OCI-LY7 (cell line): ENCODE measurements at regions of chr5 and their contacts with region 1.

Region 1: DNA sequence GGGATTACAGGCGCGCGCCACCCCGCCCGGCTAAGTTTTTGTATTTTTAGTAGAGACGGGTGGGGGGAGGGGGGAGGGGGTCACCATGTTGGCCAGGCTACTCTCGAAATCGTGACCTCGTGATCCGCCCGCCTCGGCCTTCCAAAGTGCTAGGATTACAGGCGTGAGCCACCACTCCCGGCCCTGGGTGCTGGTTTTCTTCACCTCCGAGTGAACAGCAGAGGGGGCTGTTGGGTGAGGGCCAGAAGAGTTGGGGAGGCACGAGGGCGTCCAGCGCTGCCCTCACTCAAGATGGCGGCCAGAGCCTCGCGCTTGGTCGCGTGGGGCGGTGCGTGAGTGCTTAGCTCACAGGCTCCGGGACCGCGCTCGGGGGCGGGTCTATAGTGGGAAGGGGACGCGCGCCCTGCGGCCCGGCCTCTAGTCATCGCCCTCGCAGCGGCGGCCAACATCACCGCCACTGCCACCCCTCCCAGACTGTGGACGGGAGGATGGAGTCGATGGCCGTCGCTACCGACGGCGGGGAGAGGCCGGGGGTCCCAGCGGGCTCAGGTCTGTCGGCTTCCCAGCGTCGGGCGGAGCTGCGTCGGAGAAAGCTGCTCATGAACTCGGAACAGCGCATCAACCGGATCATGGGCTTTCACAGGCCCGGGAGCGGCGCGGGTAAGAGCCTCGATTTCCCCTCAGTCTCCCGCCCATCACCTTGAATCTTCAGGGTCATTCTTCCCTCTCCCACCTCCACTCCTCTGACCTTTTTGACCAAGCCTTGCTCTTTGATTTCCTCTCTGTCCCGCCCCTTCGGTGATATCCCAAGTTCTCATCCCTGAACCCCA is at the start of gene CAMLG:
- DNase-seq: peak; percentile 98
- H3K4me3 ChIP-seq: peak within 1 kb of the TSS; percentile 84
- H3K27ac ChIP-seq: peak within 1 kb of the TSS; percentile 42
- H3K4me1 ChIP-seq: peaks cover 36% of the 10 kb centered on the region
- CTCF ChIP-seq: peak; percentile 79
- total RNA-seq, gene CAMLG: 27.3 and 28.5 TPM in 2 replicates

Region 2: DNA sequence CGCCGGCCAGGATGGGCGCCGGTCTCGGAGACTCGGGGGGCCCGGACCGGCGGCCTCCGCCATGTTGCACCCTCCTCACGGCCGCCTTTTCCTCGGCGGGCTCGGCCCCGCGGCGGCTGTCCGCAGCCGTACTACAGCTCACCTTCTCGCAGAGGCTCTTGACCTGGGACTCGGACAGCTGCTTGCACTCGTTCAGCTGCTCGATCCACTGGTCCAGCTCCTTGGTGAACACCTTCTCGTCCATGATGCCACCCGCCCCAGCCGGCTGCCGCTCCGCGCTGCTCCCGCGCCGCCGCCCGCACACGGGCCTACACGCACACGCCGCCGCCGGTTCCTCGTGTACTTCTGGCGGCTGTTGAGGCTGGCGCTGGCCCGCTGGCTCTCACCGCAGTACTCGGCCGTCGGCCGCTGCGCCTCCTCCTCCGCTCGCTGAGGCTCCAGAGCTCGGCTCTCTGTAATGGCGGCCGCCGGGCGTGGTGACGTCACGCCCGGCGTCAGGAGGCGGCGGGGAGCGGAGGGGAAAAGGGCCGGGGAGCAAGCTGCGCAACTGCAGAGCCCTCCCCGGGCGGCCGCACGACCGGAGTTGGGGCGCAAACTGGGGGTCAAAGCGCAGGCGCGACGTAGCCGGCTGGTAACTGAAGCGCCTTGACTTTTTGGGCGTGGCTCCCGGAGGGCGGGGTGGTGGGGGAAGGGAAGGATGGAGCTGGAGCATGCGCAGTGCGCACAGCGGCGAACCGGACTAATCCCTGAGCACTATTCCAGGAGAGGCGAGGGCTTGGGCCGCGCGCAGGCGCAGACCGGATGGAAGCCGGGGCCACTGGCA is 512.5 kb before region 1 on chr5 and contains the start of gene PPP2CA:
- CTCF ChIA-PET with region 1: no interaction called
- POLR2A ChIA-PET with region 1: no interaction called
- intact Hi-C with region 1: loop called (anchors 5 kb)
- DNase-seq: peak; percentile 96
- H3K4me3 ChIP-seq: peak within 1 kb of the TSS; percentile 93
- H3K27ac ChIP-seq: peak within 1 kb of the TSS; percentile 88
- H3K4me1 ChIP-seq: peaks cover 35% of the 10 kb centered on the region
- CTCF ChIP-seq: peak; percentile 28; the same call in 1 of the 2 replicates
- total RNA-seq, gene PPP2CA: 132 and 144 TPM in 2 replicates

Region 3: GRCh38 chr5:134411546-134412266 is 326.6 kb before region 1 on chr5 and contains the start of gene CDKN2AIPNL:
- CTCF ChIA-PET with region 1: interaction called, 3 read pairs
- POLR2A ChIA-PET with region 1: no interaction called
- intact Hi-C with region 1: loop called (anchors 5 kb)
- DNase-seq: peak; percentile 91
- H3K4me3 ChIP-seq: peak within 1 kb of the TSS; percentile 100
- H3K27ac ChIP-seq: peak within 1 kb of the TSS; percentile 27
- H3K4me1 ChIP-seq: peaks cover 26% of the 10 kb centered on the region
- CTCF ChIP-seq: peak; percentile 79
- total RNA-seq, gene CDKN2AIPNL: 40.5 and 47.8 TPM in 2 replicates

Region 4: GRCh38 chr5:134586866-134587524 is 151.4 kb before region 1 on chr5:
- CTCF ChIA-PET with region 1: interaction called, 4 read pairs
- POLR2A ChIA-PET with region 1: interaction called, 4 read pairs
- intact Hi-C with region 1: loop called (anchors 2 kb)
- DNase-seq: peak; percentile 87
- H3K4me3 ChIP-seq: no peak overlapping the region
- H3K27ac ChIP-seq: no peak overlapping the region
- H3K4me1 ChIP-seq: peaks cover 6% of the 10 kb centered on the region
- CTCF ChIP-seq: peak; percentile 99

Region 5: GRCh38 chr5:134692722-134693121 is 45.6 kb before region 1 on chr5:
- CTCF ChIA-PET with region 1: no interaction called
- POLR2A ChIA-PET with region 1: no interaction called
- intact Hi-C with region 1: no loop called
- DNase-seq: no peak
- H3K4me3 ChIP-seq: no peak overlapping the region
- H3K27ac ChIP-seq: no peak overlapping the region
- H3K4me1 ChIP-seq: no peaks in the 10 kb centered on the region
- CTCF ChIP-seq: no peak

Region 6: GRCh38 chr5:134758504-134759341 is 20.4 kb after region 1 on chr5 and contains the start of gene DDX46:
- CTCF ChIA-PET with region 1: interaction called, 5 read pairs
- POLR2A ChIA-PET with region 1: interaction called, 14 read pairs
- intact Hi-C with region 1: loop called (anchors 1 kb)
- DNase-seq: peak; percentile 96
- H3K4me3 ChIP-seq: peak within 1 kb of the TSS; percentile 90
- H3K27ac ChIP-seq: peak within 1 kb of the TSS; percentile 48
- H3K4me1 ChIP-seq: peaks cover 31% of the 10 kb centered on the region
- CTCF ChIP-seq: peak; percentile 84
- total RNA-seq, gene DDX46: 44.5 and 47.1 TPM in 2 replicates

Region 7: DNA sequence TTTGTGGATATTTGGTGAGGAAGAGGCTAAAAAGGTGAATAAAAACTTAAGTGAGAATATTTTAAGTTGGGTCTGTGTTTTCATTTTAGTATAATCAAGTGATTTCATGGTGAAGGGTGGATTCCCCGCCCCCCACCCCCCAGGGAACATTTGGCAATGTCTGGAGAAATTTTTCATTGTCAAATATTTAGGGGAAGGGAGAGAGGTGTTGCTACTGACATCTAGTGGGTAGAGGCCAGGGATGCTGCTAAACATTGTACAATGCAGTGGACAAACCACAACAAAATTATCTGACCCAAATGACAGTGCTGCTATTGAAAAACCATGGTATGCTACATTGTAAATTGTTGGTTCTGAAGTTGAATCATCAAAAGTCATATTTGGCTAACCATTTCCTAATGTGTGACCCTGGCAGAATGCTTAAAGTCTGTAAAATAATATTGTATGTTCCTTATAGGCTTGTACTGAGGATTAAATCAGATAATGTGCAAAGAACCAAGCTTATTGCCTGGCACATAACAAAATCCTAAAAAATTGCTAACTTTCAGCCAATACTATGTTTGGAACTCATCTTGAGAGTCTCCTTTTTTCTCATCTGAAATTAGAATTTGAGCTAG is 113.1 kb after region 1 on chr5:
- CTCF ChIA-PET with region 1: no interaction called
- POLR2A ChIA-PET with region 1: no interaction called
- intact Hi-C with region 1: loop called (anchors 2 kb)
- DNase-seq: peak; percentile 37
- H3K4me3 ChIP-seq: no peak overlapping the region
- H3K27ac ChIP-seq: no peak overlapping the region
- H3K4me1 ChIP-seq: peaks cover 9% of the 10 kb centered on the region
- CTCF ChIP-seq: peak; percentile 82

Region 8: DNA sequence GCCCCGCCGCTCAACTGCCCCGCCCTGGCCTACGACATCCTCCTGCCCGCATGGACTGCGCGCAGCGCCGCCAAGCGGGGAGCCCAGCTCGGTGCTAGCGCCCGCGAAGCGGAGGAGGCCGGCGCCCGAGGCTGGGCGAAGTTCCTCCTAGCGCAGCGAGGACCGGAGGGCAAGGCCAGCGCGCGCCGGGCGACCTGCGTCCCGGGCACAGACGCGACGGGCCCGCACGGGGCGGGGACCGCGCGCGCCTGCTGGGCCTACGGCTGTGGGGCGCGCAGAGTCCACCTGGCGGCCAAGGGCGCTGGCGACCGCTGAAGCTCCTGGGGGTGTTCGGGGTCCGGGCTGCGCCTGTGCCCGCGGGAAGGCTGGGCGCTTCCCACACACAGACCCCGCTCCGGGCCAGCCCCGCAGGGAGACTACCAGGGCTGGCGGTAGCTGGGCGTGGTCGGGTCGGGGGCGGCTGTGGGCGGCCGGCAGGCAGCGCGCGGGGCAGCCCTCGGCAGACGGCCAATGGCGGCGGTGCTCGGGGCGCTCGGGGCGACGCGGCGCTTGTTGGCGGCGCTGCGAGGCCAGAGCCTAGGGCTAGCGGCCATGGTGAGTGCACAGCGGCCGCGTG is 166.4 kb after region 1 on chr5 and contains the start of gene PCBD2:
- CTCF ChIA-PET with region 1: interaction called, 4 read pairs
- POLR2A ChIA-PET with region 1: interaction called, 10 read pairs
- intact Hi-C with region 1: loop called (anchors 1 kb)
- DNase-seq: peak; percentile 96
- H3K4me3 ChIP-seq: peak within 1 kb of the TSS; percentile 82
- H3K27ac ChIP-seq: peak within 1 kb of the TSS; percentile 93
- H3K4me1 ChIP-seq: peaks cover 41% of the 10 kb centered on the region
- CTCF ChIP-seq: peak; percentile 84
- total RNA-seq, gene PCBD2: 9.4 and 12.2 TPM in 2 replicates

Region 9: DNA sequence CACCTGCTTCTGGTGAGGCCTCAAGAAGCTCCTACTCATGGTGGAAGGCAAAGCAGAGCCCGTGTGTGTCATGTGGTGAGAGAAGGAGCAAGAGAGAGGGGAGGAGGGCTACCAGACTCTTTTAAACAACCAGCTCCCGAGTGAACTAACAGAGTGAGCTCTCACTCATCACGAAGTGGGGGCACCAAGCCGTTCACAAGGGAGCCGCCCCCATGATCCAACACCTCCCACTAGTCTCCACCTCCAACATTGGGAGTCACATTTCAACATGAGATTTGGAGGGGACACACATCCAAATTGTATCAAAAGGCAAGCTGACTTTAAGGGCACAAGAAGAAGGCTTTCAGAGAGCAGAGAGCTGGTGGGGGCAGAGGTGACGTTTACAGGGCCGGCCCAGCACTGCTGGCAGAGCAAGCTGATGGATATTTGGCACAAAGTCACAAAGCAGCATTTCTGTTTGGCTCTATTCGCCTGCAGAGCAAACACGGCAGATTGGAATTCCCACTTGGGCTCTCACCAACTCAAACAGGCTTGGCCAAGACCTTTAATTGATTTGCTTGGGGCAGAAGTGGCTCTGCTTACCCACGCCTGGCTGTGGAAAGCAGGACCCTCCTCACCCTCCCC is 275.7 kb after region 1 on chr5:
- CTCF ChIA-PET with region 1: no interaction called
- POLR2A ChIA-PET with region 1: no interaction called
- intact Hi-C with region 1: no loop called
- DNase-seq: no peak
- H3K4me3 ChIP-seq: no peak overlapping the region
- H3K27ac ChIP-seq: no peak overlapping the region
- H3K4me1 ChIP-seq: no peaks in the 10 kb centered on the region
- CTCF ChIP-seq: no peak

Region 10: DNA sequence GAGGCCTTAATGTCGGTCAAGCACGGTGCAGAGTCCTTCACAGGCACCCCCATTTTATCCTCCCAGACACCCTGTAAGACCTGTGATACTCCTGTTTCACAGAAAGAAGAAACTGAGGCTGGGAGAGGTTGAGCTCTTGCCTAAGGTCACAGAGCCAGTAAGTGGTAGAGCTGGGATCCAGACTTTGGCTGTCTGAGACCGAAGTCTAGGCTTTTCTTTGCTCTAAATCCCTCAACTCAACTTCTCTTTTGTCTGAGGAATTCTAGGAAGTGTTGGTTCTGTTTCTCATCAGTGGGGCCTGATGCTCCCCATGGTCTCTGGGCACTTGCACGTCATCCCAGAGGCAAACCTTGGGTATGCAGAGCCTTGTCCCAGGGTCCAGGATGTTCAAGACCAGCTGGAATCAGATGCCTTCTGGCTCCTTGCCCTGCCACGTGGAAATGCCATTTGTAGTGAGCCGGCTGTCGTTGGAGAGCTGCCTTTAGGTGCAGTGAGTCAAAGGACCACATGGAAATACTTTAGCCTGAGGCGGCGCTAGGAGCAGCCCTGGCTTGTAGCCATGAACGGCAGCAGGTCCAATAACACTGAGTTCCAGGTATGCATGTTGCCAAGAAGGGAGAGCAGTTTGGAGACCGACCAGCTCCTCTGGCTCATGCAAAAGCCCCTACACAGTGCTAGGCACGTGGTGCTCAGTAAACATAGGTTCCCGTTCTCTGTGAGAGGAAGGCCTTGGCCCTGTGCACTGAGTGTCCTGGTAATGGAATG is 699.6 kb after region 1 on chr5:
- CTCF ChIA-PET with region 1: no interaction called
- POLR2A ChIA-PET with region 1: no interaction called
- intact Hi-C with region 1: no loop called
- DNase-seq: no peak
- H3K4me3 ChIP-seq: no peak overlapping the region
- H3K27ac ChIP-seq: no peak overlapping the region
- H3K4me1 ChIP-seq: peaks cover 12% of the 10 kb centered on the region
- CTCF ChIP-seq: no peak